Activated naive CD4-positive, alpha-beta T cell treated with anti-CD3 and anti-CD28 coated beads, Interleukin-2, amount 10 ng/mL, durations not matched to agents 7 days and 5 days (primary cell): ENCODE measurements at regions of chr1 and their contacts with region 1.

Region 1: GRCh38 chr1:185595835-185596667 is 138.1 kb upstream of the HMCN1 start:
- DNase-seq: peak; percentile 58
- H3K4me3 Mint-ChIP-seq: no peak overlapping the region
- H3K27ac Mint-ChIP-seq: peak overlapping the region; percentile 55
- H3K4me1 Mint-ChIP-seq: peaks cover 8% of the 10 kb centered on the region
- H3K27me3 Mint-ChIP-seq: no peaks in the 10 kb centered on the region

Region 2: GRCh38 chr1:185568155-185569123 is 27.6 kb before region 1 on chr1:
- CTCF ChIA-PET with region 1: interaction called, 12 read pairs
- DNase-seq: no peak
- H3K4me3 Mint-ChIP-seq: no peak overlapping the region
- H3K27ac Mint-ChIP-seq: no peak overlapping the region
- H3K4me1 Mint-ChIP-seq: peaks cover 48% of the 10 kb centered on the region
- H3K27me3 Mint-ChIP-seq: no peaks in the 10 kb centered on the region

Region 3: DNA sequence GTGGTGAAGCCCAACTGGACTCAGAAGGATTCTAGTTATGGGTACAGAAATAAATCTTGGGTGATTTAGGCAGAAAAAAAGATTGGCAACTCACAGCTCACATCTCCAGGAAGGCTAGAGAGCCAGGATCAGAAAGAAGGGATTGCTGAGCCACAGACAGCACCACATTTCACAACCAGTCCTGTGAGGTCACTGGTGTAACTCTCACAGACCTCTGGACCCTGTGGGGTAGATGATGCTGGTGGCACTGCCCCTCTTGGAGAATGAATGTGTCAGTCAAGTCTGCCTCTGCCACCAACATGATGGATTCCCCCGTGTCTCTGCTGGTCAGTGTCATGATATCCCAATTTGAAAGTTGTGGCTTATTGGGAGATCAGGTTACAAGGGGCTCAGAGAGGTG is 67.3 kb after region 1 on chr1:
- CTCF ChIA-PET with region 1: no interaction called
- DNase-seq: no peak
- H3K4me3 Mint-ChIP-seq: no peak overlapping the region
- H3K27ac Mint-ChIP-seq: no peak overlapping the region
- H3K4me1 Mint-ChIP-seq: peaks cover 3% of the 10 kb centered on the region
- H3K27me3 Mint-ChIP-seq: no peaks in the 10 kb centered on the region

Region 4: DNA sequence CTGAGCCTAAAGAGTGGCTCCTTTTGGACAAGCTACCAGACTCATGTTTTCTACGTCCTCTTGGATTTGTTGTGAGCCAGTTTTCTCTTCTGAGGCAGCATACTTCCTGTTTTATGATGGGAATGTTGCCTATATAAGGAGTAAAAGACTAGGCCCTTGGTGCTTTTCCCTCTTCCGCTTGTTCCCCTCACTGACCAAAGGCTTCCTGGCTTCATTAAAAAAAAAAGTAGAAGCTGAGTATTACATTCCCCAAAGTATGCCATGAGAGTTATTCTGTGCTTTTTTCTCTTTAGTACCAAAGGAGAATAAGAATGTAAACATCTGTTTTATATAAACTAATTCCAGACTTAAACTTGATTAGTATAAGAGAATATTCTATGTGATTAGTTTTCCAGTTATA is 131.7 kb after region 1 on chr1:
- CTCF ChIA-PET with region 1: no interaction called
- DNase-seq: no peak
- H3K4me3 Mint-ChIP-seq: no peak overlapping the region
- H3K27ac Mint-ChIP-seq: no peak overlapping the region
- H3K4me1 Mint-ChIP-seq: no peaks in the 10 kb centered on the region
- H3K27me3 Mint-ChIP-seq: no peaks in the 10 kb centered on the region